Breast epithelium (tissue), 4 donors: ENCODE measurements at regions of chr1 and their contacts with region 1.

Region 1: GRCh38 chr1:101613546-101613945 is 376.7 kb downstream of the S1PR1 start:
- DNase-seq: no peak
- H3K4me3 ChIP-seq: no peak overlapping the region
- H3K27ac ChIP-seq: no peak overlapping the region
- H3K4me1 ChIP-seq: no peaks in the 10 kb centered on the region
- H3K27me3 ChIP-seq: no peaks in the 10 kb centered on the region
- CTCF ChIP-seq: no peak
- POLR2A ChIP-seq: no peak

Region 2: DNA sequence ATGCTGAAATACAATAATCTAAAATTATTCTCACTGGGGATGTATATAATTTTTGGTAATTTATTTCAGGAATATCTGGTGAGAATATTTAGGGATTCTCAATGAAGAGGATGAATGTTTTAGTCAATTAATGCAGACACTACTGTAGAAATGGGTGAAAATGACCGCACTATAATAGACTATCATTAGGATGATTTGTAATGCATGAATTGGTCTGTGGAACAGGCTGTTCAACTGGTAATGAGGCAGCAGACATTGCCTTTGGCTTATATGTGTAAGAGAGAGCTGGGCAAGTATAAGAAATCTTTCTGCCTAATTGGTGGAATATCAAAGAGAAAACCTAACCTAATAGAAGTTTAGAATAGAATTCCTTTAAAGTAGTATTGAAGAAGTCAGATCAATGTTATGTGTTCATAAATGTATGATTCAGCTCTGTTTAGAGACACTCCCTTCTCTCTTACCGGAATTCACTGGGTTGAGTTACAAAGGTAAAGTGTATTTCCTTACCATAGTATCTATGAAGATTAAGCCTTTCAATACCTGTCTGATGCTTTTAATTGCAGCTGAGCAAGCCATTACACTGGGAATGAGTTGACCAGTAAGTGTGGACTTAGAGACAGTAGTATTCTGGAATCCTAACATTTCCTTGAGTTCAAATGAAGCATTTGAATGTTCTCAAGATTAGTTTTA is 102.2 kb before region 1 on chr1:
- intact Hi-C with region 1: loop called (anchors 5 kb)
- DNase-seq: no peak
- H3K4me3 ChIP-seq: no peak overlapping the region
- H3K27ac ChIP-seq: no peak overlapping the region
- H3K4me1 ChIP-seq: no peaks in the 10 kb centered on the region
- H3K27me3 ChIP-seq: no peaks in the 10 kb centered on the region
- CTCF ChIP-seq: no peak
- POLR2A ChIP-seq: no peak

Region 3: DNA sequence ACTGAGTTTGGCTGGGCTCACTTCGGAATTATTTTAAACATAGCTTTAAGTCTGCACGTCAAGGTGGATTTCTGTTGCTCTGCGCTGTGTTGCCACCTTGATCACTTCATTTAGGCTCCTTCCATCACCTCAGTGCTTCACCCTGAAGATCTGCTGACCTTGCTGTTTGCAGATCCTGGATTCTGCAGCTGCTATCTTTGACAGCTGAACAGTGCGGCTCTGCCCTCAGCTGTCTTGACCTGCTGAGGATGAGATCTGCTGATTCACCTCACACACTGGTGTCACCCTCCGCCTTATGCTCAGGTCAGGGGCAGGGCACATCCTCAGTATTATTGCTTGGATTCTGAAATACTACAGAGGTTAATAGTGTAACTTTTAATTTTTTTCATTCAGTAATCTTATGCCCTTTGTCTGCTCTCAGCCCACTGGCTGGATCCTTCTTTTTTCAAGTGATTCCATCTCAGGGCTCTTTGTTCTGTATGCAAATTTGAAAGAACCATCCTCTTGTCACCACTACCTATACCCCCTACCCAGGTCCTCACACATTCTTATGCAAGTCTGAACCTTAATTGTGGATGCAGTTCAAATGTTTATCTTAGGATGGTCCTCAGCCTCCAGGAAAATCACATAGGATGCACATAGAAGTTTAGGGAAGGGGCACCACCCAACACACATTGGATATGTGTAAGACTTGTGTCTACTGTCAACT is 19.2 kb after region 1 on chr1:
- intact Hi-C with region 1: no loop called
- DNase-seq: no peak
- H3K4me3 ChIP-seq: no peak overlapping the region
- H3K27ac ChIP-seq: no peak overlapping the region
- H3K4me1 ChIP-seq: no peaks in the 10 kb centered on the region
- H3K27me3 ChIP-seq: no peaks in the 10 kb centered on the region
- CTCF ChIP-seq: no peak
- POLR2A ChIP-seq: no peak